Activated naive CD4-positive, alpha-beta T cell treated with anti-CD3 and anti-CD28 coated beads for 36 hours (primary cell): ENCODE measurements at regions of chr16 and their contacts with region 1.

Region 1: DNA sequence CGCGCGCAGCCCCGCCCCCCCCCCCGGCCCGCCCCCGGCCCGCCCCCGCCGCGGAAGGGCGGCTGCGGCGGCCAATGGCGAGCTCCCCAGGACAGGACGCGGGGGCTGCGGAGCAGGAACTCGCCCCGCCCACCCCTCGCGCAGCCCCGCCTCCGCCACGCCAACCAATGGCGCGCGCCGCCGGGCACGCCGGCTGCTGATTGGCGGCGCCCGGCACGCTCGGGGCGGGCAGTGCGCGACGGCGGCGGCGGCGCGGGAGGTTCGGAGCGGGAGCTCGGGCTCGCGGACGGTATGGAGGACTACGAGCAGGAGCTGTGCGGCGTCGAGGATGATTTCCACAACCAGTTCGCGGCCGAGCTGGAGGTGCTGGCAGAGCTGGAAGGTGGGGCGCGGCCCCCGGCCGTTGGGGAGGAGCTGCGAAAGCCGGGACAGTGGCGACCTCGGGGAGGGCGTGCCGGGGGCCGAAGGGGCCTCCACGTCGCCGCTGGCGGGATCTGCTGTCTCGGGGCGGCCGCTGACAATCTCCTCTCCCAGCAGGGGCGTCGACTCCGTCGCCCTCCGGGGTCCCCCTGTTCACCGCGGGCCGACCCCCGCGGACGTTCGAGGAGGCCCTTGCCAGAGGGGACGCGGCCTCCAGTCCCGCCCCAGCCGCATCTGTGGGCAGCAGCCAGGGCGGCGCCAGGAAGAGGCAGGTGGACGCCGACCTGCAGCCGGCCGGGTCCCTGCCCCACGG is at the start of gene CHTF18:
- DNase-seq: peak; percentile 94
- H3K4me3 Mint-ChIP-seq: peak within 1 kb of the TSS; percentile 83
- H3K27ac Mint-ChIP-seq: no peak within 1 kb of the TSS
- H3K4me1 Mint-ChIP-seq: peaks cover 13% of the 10 kb centered on the region
- H3K27me3 Mint-ChIP-seq: no peaks in the 10 kb centered on the region
- total RNA-seq, gene CHTF18: 126 to 127 TPM

Region 2: GRCh38 chr16:495127-495748 is 293.3 kb before region 1 on chr16:
- CTCF ChIA-PET with region 1: no interaction called
- intact Hi-C with region 1: no loop called
- DNase-seq: peak; percentile 30
- H3K4me3 Mint-ChIP-seq: no peak overlapping the region
- H3K27ac Mint-ChIP-seq: no peak overlapping the region
- H3K4me1 Mint-ChIP-seq: no peaks in the 10 kb centered on the region
- H3K27me3 Mint-ChIP-seq: no peaks in the 10 kb centered on the region

Region 3: DNA sequence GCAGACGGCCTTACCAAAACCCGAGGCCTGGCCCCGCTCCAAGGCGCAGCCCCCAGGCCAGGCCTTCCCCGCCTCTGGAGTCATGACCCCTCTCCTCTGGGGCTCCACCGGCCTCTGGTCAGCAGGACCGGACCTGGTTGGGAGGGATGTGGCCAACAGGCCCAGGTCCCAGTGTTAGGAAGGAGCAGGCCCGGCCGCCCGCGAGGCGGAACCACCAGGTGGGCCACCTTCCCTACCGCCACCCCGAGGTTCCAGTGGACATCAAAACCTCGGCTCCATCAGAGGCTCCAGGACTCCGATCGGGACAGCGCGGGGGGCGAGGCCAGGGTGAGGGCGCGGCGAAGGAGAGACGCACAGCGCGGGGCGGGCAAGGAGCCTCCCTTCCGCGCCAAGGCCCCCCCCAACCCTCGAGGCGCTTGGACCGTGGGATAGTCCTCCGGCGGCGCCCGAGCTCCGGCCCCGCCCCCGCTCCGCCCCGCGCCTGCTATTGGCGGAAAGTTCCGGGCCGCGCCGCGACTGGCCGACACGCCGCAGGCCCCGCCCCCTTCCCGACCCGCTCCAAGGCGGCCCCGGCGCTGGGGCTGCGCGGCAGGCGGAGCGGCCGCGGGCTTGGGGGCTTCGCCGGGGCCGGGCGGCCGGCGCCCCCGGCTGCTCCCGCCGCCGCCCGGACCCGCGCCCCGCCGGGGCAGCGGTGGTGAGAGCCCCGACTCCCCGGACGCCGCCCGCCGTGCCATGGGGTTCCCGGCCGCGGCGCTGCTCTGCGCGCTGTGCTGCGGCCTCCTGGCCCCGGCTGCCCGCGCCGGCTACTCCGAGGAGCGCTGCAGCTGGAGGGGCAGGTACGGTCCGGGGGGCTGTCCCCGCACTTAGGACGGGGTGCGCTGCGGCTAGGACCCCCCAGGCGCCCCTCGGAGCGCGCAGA is 73.7 kb before region 1 on chr16 and contains the start of gene METRN:
- CTCF ChIA-PET with region 1: interaction called, 55 read pairs
- intact Hi-C with region 1: loop called (anchors 1 kb)
- DNase-seq: peak; percentile 87
- H3K4me3 Mint-ChIP-seq: peak within 1 kb of the TSS; percentile 53
- H3K27ac Mint-ChIP-seq: no peak within 1 kb of the TSS
- H3K4me1 Mint-ChIP-seq: peaks cover 10% of the 10 kb centered on the region
- H3K27me3 Mint-ChIP-seq: peaks cover 22% of the 10 kb centered on the region
- total RNA-seq, gene METRN: 8.2 to 11.0 TPM

Region 4: GRCh38 chr16:807347-808084 is 19.0 kb after region 1 on chr16:
- CTCF ChIA-PET with region 1: interaction called, 3 read pairs
- intact Hi-C with region 1: loop called (anchors 1 kb)
- DNase-seq: peak; percentile 91
- H3K4me3 Mint-ChIP-seq: peak overlapping the region; percentile 98
- H3K27ac Mint-ChIP-seq: peak overlapping the region; percentile 88
- H3K4me1 Mint-ChIP-seq: peaks cover 11% of the 10 kb centered on the region
- H3K27me3 Mint-ChIP-seq: no peaks in the 10 kb centered on the region